GM12878 (cell line): ENCODE measurements at regions of chr10 and their contacts with region 1.

Region 1: DNA sequence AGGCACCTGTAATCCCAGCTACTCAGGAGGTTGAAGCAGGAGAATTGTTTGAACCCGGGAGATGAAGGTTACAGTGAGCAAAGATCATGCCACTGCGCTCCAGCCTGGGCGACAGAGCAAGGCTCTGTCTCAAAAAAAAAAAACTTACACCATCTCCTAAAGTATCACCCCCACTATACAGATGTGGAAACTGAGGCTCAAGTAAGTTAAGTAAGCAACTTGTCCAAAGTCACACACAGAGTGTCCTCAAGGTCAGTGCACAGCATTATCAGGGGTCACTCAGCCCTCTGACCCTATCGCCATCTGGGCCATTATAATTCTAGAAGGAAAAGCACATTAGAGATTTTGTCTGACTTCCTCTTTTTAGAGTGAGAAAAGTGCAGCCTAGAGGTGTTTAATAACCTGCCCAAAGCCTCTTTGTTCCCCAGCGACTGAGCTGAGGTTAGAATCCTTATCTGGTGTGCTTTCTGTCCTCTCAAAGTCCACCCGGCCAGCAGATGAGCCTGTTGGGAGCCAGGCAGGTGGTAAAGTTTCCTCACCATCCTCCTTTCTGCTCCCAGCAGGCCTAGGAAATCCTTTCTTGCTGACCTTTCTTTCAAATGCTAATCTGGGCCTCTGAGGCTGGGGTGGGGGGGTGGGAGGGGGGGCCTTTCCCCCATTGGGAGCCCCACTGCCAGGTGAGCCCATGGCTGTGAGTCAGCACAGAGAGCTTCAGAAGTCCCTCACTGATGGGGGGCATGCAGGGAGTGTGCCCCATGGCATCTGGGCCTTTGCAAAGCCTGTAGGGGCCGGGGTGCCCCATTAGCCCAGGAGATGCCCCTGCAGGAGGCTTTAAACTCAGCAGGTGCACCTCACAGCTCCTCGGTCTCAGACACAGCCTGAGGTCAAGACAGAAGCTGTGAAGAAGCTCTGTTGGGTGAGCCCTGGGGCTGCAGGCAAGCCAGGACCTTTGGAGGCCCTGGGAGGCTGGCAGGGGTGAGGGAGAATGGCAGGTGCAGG is 12.0 kb upstream of the KCNMA1 start:
- DNase-seq: no peak
- ATAC-seq: peak; percentile 81
- H3K4me3 ChIP-seq: no peak overlapping the region
- H3K27ac ChIP-seq: peak overlapping the region; percentile 43; the same call in 1 of the 2 replicates
- H3K4me1 ChIP-seq: peaks cover 24% of the 10 kb centered on the region
- H3K27me3 ChIP-seq: no peaks in the 10 kb centered on the region
- CTCF ChIP-seq: no peak
- EP300 ChIP-seq: no peak
- POLR2A ChIP-seq: no peak
- RAD21 ChIP-seq: no peak

Region 2: GRCh38 chr10:77251297-77252013 is 398.2 kb before region 1 on chr10:
- CTCF ChIA-PET with region 1: interaction called, 126 read pairs
- POLR2A ChIA-PET with region 1: no interaction called
- RAD21 ChIA-PET with region 1: interaction called, 14 read pairs
- SMC1A ChIA-PET with region 1: interaction called, 21 read pairs
- in situ Hi-C with region 1: loop called (anchors 5 kb)
- intact Hi-C with region 1: no loop called
- DNase-seq: no peak
- ATAC-seq: peak; percentile 94
- H3K4me3 ChIP-seq: no peak overlapping the region
- H3K27ac ChIP-seq: no peak overlapping the region
- H3K4me1 ChIP-seq: no peaks in the 10 kb centered on the region
- H3K27me3 ChIP-seq: no peaks in the 10 kb centered on the region
- CTCF ChIP-seq: peak; percentile 59 to 76 (median 64)
- EP300 ChIP-seq: no peak
- POLR2A ChIP-seq: no peak
- RAD21 ChIP-seq: peak; percentile 66

Region 3: DNA sequence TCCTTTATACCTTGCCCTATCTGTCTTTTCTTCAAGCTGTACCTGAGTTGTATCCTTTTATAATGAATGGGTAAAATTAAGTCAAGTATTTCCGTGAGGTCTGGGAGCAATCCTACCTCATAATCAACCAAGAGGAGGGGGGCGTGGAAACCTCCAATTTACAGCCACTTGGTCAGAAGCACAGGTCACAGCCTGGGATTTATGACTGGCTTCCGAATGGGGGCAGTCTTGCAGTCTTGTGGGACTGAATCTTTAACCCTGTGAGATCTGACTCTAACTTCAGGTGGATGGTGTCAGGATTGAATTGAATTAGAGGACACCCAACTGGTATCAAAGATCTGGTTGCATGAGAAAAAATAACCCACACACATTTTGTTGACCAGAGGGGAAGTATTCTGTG is 11.5 kb after region 1 on chr10:
- CTCF ChIA-PET with region 1: interaction called, 25 read pairs
- POLR2A ChIA-PET with region 1: interaction called, 7 read pairs
- RAD21 ChIA-PET with region 1: interaction called, 4 read pairs
- SMC1A ChIA-PET with region 1: interaction called, 10 read pairs
- in situ Hi-C with region 1: no loop called
- intact Hi-C with region 1: no loop called
- DNase-seq: no peak
- ATAC-seq: peak; percentile 30; the same call in 1 of the 3 replicates
- H3K4me3 ChIP-seq: no peak overlapping the region
- H3K27ac ChIP-seq: no peak overlapping the region
- H3K4me1 ChIP-seq: no peaks in the 10 kb centered on the region
- H3K27me3 ChIP-seq: no peaks in the 10 kb centered on the region
- CTCF ChIP-seq: no peak
- EP300 ChIP-seq: no peak
- POLR2A ChIP-seq: no peak
- RAD21 ChIP-seq: 0 out of 2 replicates have a peak, but pooled peaks have one; percentile 27

Region 4: GRCh38 chr10:77667426-77668324 is 18.0 kb after region 1 on chr10:
- CTCF ChIA-PET with region 1: interaction called, 12 read pairs
- POLR2A ChIA-PET with region 1: interaction called, 7 read pairs
- RAD21 ChIA-PET with region 1: interaction called, 7 read pairs
- SMC1A ChIA-PET with region 1: interaction called, 11 read pairs
- in situ Hi-C with region 1: no loop called
- intact Hi-C with region 1: no loop called
- DNase-seq: peak; percentile 77
- ATAC-seq: peak; percentile 95
- H3K4me3 ChIP-seq: no peak overlapping the region
- H3K27ac ChIP-seq: no peak overlapping the region
- H3K4me1 ChIP-seq: peaks cover 13% of the 10 kb centered on the region
- H3K27me3 ChIP-seq: no peaks in the 10 kb centered on the region
- CTCF ChIP-seq: no peak
- EP300 ChIP-seq: peak; percentile 11 to 48; a peak in 1 of 4 replicates
- POLR2A ChIP-seq: no peak
- RAD21 ChIP-seq: no peak

Region 5: GRCh38 chr10:77685432-77685831 is 35.8 kb after region 1 on chr10:
- CTCF ChIA-PET with region 1: interaction called, 25 read pairs
- POLR2A ChIA-PET with region 1: interaction called, 6 read pairs
- RAD21 ChIA-PET with region 1: interaction called, 6 read pairs
- SMC1A ChIA-PET with region 1: interaction called, 13 read pairs
- in situ Hi-C with region 1: no loop called
- intact Hi-C with region 1: loop called (anchors 2 kb)
- DNase-seq: no peak
- ATAC-seq: peak; percentile 81
- H3K4me3 ChIP-seq: no peak overlapping the region
- H3K27ac ChIP-seq: no peak overlapping the region
- H3K4me1 ChIP-seq: peaks cover 47% of the 10 kb centered on the region
- H3K27me3 ChIP-seq: no peaks in the 10 kb centered on the region
- CTCF ChIP-seq: peak in 1 of 3 experiments; percentile 15; a peak in 1 of 6 replicates
- EP300 ChIP-seq: no peak
- POLR2A ChIP-seq: no peak
- RAD21 ChIP-seq: no peak